Common myeloid progenitor, CD34-positive (primary cell): ENCODE measurements at regions of chr19 and their contacts with region 1.

Region 1: GRCh38 chr19:4139614-4140236 is 13.7 kb upstream of the CREB3L3 start:
- DNase-seq: peak; percentile 63 to 72 (median 65)
- H3K4me3 ChIP-seq: no peak overlapping the region
- H3K27ac ChIP-seq: no peak overlapping the region
- H3K4me1 ChIP-seq: peaks cover 0 to 3% (median 0%) of the 10 kb centered on the region in 4 experiments
- H3K27me3 ChIP-seq: peaks cover 0 to 4% (median 3%) of the 10 kb centered on the region in 5 experiments

Region 2: GRCh38 chr19:4103073-4103418 is 36.7 kb before region 1 on chr19:
- CTCF ChIA-PET with region 1: interaction called, 16 read pairs
- POLR2A ChIA-PET with region 1: interaction called, 6 read pairs
- DNase-seq: peak in 1 of 3 donors; percentile 10
- H3K4me3 ChIP-seq: no peak overlapping the region
- H3K27ac ChIP-seq: no peak overlapping the region
- H3K4me1 ChIP-seq: peaks cover 0 to 31% (median 25%) of the 10 kb centered on the region in 4 experiments
- H3K27me3 ChIP-seq: no peaks in the 10 kb centered on the region

Region 3: GRCh38 chr19:4152241-4152998 is 12.7 kb after region 1 on chr19:
- CTCF ChIA-PET with region 1: interaction called, 17 read pairs
- POLR2A ChIA-PET with region 1: no interaction called
- DNase-seq: no peak
- H3K4me3 ChIP-seq: no peak overlapping the region
- H3K27ac ChIP-seq: no peak overlapping the region
- H3K4me1 ChIP-seq: peaks cover 0 to 6% (median 3%) of the 10 kb centered on the region in 4 experiments
- H3K27me3 ChIP-seq: peaks cover 0 to 4% (median 0%) of the 10 kb centered on the region in 5 experiments

Region 4: GRCh38 chr19:4174213-4174894 is 34.6 kb after region 1 on chr19:
- CTCF ChIA-PET with region 1: no interaction called
- POLR2A ChIA-PET with region 1: no interaction called
- DNase-seq: no peak
- H3K4me3 ChIP-seq: no peak overlapping the region
- H3K27ac ChIP-seq: no peak overlapping the region
- H3K4me1 ChIP-seq: peaks cover 0 to 6% (median 2%) of the 10 kb centered on the region in 4 experiments
- H3K27me3 ChIP-seq: peaks cover 0 to 27% (median 9%) of the 10 kb centered on the region in 5 experiments

Region 5: GRCh38 chr19:4194353-4194752 is 54.6 kb after region 1 on chr19:
- CTCF ChIA-PET with region 1: no interaction called
- POLR2A ChIA-PET with region 1: no interaction called
- DNase-seq: no peak
- H3K4me3 ChIP-seq: no peak overlapping the region
- H3K27ac ChIP-seq: no peak overlapping the region
- H3K4me1 ChIP-seq: peaks cover 0 to 3% (median 0%) of the 10 kb centered on the region in 4 experiments
- H3K27me3 ChIP-seq: peaks cover 4 to 39% (median 11%) of the 10 kb centered on the region in 5 experiments